Calu3 (cell line): ENCODE measurements at regions of chr3 and their contacts with region 1.

Region 1: GRCh38 chr3:183385698-183386613 is 42.5 kb downstream of the MCF2L2 start:
- DNase-seq: peak; percentile 77
- H3K4me3 Mint-ChIP-seq: no peak overlapping the region
- H3K27ac Mint-ChIP-seq: no peak overlapping the region
- H3K4me1 Mint-ChIP-seq: peaks cover 31% of the 10 kb centered on the region
- H3K27me3 Mint-ChIP-seq: peaks cover 24% of the 10 kb centered on the region
- CTCF ChIP-seq: peak; percentile 86

Region 2: DNA sequence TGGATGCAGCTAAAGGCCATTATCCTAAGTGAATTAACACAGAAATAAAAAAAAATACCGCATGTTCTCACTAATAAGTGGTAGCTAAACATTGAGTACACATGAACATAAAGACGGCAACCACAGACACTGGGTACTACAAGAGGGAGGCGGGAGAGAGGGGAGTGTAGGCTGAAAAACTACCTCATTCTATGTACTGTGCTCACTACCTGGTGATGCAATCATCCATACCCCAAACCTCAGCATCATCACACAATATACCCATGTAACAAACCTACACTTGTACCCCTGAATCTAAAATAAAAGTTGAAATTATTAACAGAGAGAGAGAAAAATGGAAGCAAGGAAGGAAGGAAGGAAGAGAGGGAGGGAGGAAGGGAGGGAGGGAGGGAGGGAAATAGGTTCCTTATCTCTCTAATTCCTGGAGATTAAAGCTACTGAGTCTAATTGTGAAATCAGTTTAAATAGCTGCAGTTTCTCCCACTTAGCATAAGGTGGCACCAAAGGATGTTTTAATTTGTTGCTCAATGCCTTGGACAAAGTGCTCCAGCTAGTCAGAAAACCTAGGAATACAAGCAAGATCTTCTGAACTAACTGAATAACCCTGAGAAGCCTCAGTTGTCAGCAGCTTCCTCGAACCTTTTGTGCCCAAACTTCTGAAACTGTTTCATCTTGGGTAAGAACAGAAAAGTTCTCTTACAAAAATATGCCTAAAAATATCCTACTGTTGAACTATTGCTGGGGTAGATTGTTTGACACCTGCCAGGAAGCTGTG is 672.0 kb before region 1 on chr3:
- CTCF ChIA-PET with region 1: no interaction called
- intact Hi-C with region 1: loop called (anchors 5 kb)
- DNase-seq: peak; percentile 45
- H3K4me3 Mint-ChIP-seq: no peak overlapping the region
- H3K27ac Mint-ChIP-seq: peak overlapping the region; percentile 24
- H3K4me1 Mint-ChIP-seq: peaks cover 21% of the 10 kb centered on the region
- H3K27me3 Mint-ChIP-seq: no peaks in the 10 kb centered on the region
- CTCF ChIP-seq: peak; percentile 75

Region 3: DNA sequence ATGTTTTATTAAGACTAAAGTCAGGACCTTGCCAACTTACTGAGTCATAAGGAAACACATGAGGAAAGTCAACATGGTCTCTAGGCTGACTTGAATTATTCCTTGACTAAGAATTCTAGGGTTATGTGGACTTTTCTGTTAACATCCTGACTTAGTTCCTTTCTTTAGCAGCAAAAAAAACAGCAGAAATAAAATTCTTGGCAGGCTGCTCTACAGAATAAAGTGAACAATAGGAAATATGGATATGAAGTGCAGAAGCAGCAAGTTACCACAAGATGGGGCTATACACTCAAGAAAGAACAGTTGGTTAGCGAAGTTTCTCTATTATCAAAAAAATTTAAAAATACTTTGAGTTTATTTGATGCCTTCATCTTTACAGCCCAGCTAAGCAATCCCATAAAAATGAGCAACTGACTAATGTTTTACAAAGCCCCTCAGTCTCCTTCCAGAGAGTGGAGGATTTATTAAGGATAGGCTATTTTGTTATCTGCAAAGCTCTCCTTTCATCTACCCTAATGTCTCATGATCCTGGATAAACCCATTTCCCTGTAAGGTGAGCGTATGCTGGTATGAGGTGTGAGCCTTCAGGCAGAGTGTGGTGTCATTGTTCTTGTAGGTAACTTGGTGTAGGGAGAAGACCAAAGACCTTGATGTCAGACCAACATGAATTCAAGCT is 263.6 kb before region 1 on chr3:
- CTCF ChIA-PET with region 1: interaction called, 11 read pairs
- intact Hi-C with region 1: loop called (anchors 1 kb)
- DNase-seq: no peak
- H3K4me3 Mint-ChIP-seq: no peak overlapping the region
- H3K27ac Mint-ChIP-seq: no peak overlapping the region
- H3K4me1 Mint-ChIP-seq: peaks cover 25% of the 10 kb centered on the region
- H3K27me3 Mint-ChIP-seq: peaks cover 13% of the 10 kb centered on the region
- CTCF ChIP-seq: peak; percentile 86

Region 4: DNA sequence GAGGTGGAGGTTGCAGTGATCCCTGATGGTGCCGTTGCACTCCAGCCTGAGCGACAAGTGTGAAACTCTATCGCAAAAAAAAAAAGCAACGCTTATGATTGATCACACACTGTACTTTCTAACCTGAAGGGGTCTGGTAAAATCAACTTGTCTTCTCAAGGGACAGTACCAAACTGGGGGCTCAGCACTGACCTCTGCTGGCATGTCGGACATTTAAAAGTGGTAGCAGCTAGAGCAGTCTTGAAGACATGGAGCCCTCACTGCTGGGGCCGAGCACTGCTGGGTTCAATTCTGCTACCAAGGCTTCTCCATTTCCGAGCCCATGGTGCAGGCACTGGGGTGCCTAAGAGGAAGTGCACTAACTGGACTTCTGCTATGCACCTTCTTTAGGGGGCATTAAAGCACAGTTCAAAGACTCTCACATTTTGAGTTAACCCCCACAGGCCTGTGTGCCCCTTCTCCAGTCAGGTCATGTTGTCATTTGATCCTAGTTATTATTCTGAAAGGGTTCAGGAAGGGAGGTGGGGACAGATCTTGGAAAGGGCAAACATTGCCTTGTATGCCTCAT is 197.0 kb before region 1 on chr3:
- CTCF ChIA-PET with region 1: interaction called, 224 read pairs
- intact Hi-C with region 1: loop called (anchors 1 kb)
- DNase-seq: peak; percentile 69
- H3K4me3 Mint-ChIP-seq: no peak overlapping the region
- H3K27ac Mint-ChIP-seq: no peak overlapping the region
- H3K4me1 Mint-ChIP-seq: peaks cover 7% of the 10 kb centered on the region
- H3K27me3 Mint-ChIP-seq: peaks cover 5% of the 10 kb centered on the region
- CTCF ChIP-seq: peak; percentile 55

Region 5: GRCh38 chr3:183285828-183286457 is 100.0 kb before region 1 on chr3:
- CTCF ChIA-PET with region 1: interaction called, 11 read pairs
- intact Hi-C with region 1: no loop called
- DNase-seq: peak; percentile 98
- H3K4me3 Mint-ChIP-seq: peak overlapping the region; percentile 44
- H3K27ac Mint-ChIP-seq: peak overlapping the region; percentile 94
- H3K4me1 Mint-ChIP-seq: peaks cover 53% of the 10 kb centered on the region
- H3K27me3 Mint-ChIP-seq: no peaks in the 10 kb centered on the region
- CTCF ChIP-seq: no peak

Region 6: DNA sequence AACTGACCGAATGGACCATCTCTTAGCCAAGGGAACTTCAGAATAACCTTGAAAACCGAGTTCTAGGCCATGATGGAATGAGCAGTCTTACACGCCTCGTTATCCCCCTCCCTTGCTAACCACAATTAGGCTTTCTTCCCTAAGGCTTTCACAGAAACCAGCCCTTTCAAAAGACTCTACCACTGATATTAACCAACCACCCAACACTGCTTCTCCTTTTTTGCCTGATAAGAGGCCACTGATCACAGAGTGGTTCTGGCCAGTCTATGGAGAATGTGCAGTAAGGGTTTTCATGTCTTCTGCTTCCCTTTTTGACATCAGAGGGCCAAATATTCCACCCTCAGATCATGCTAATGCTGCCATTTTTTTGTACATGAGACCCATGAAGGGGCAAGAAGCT is 16.8 kb before region 1 on chr3:
- CTCF ChIA-PET with region 1: interaction called, 15 read pairs
- intact Hi-C with region 1: no loop called
- DNase-seq: no peak
- H3K4me3 Mint-ChIP-seq: no peak overlapping the region
- H3K27ac Mint-ChIP-seq: peak overlapping the region; percentile 90
- H3K4me1 Mint-ChIP-seq: peaks cover 56% of the 10 kb centered on the region
- H3K27me3 Mint-ChIP-seq: no peaks in the 10 kb centered on the region
- CTCF ChIP-seq: no peak